ENCODE measurements at regions of chr5 and their contacts with region 1.

Region 1: GRCh38 chr5:73471654-73472053 is 23.1 kb upstream of the FOXD1 start:
- DNase-seq: no peak
- ATAC-seq: no peak
- H3K4me3 ChIP-seq: no peak overlapping the region
- H3K27ac ChIP-seq: no peak overlapping the region
- H3K4me1 ChIP-seq: no peaks in the 10 kb centered on the region
- H3K27me3 ChIP-seq: peaks cover 6% of the 10 kb centered on the region; the same call in 1 of the 2 replicates
- CTCF ChIP-seq: no peak
- POLR2A ChIP-seq: no peak
- RAD21 ChIP-seq: no peak

Region 2: GRCh38 chr5:73116506-73116905 is 355.1 kb before region 1 on chr5:
- CTCF ChIA-PET with region 1: no interaction called
- POLR2A ChIA-PET with region 1: interaction called, 10 read pairs
- dilution Hi-C with region 1: no loop called
- in situ Hi-C with region 1: no loop called
- intact Hi-C with region 1: no loop called
- DNase-seq: no peak
- ATAC-seq: no peak
- H3K4me3 ChIP-seq: no peak overlapping the region
- H3K27ac ChIP-seq: no peak overlapping the region
- H3K4me1 ChIP-seq: peaks cover 15% of the 10 kb centered on the region
- H3K27me3 ChIP-seq: peaks cover 4% of the 10 kb centered on the region; the same call in 1 of the 2 replicates
- CTCF ChIP-seq: no peak
- POLR2A ChIP-seq: no peak
- RAD21 ChIP-seq: no peak

Region 3: DNA sequence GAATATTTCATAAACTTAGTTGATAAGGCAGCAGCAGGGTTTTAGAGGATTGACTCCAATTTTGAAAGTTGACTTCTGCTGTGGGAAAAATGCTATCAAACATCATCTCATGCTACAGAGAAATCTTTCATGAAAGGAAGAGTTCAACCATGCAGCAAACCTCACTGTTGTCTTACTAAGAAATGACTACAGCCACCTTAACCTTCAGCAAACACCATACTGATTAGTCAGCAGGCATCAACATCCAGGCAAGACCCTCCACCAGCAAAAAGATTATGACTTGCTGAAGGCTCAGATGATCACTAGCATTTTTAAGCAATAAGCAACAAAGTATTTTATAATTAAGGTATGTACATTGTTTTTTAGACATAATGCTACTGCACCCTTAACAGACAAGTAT is 291.1 kb before region 1 on chr5:
- CTCF ChIA-PET with region 1: no interaction called
- POLR2A ChIA-PET with region 1: interaction called, 13 read pairs
- dilution Hi-C with region 1: no loop called
- in situ Hi-C with region 1: no loop called
- intact Hi-C with region 1: no loop called
- DNase-seq: peak; percentile 49
- ATAC-seq: no peak
- H3K4me3 ChIP-seq: no peak overlapping the region
- H3K27ac ChIP-seq: no peak overlapping the region
- H3K4me1 ChIP-seq: no peaks in the 10 kb centered on the region
- H3K27me3 ChIP-seq: peaks cover 18% of the 10 kb centered on the region
- CTCF ChIP-seq: no peak
- POLR2A ChIP-seq: no peak
- RAD21 ChIP-seq: no peak

Region 4: GRCh38 chr5:73985145-73985544 is 513.5 kb after region 1 on chr5:
- CTCF ChIA-PET with region 1: no interaction called
- POLR2A ChIA-PET with region 1: no interaction called
- dilution Hi-C with region 1: no loop called
- in situ Hi-C with region 1: no loop called
- intact Hi-C with region 1: no loop called
- DNase-seq: peak; percentile 45
- ATAC-seq: no peak
- H3K4me3 ChIP-seq: no peak overlapping the region
- H3K27ac ChIP-seq: no peak overlapping the region
- H3K4me1 ChIP-seq: no peaks in the 10 kb centered on the region
- H3K27me3 ChIP-seq: peaks cover 23% of the 10 kb centered on the region
- CTCF ChIP-seq: peak; percentile 43
- POLR2A ChIP-seq: no peak
- RAD21 ChIP-seq: peak; percentile 71

Measured in IMR-90 (cell line).